CD8-positive, alpha-beta T cell (primary cell): ENCODE measurements at regions of chr15 and their contacts with region 1.

Region 1: GRCh38 chr15:34587717-34588674 is 4.5 kb upstream of the GOLGA8B start:
- DNase-seq: peak; percentile 23 to 79 (median 62)
- ATAC-seq: peak; percentile 65
- H3K4me3 ChIP-seq: no peak overlapping the region
- H3K4me3 Mint-ChIP-seq: peak overlapping the region; percentile 72
- H3K27ac ChIP-seq: no peak overlapping the region
- H3K27ac Mint-ChIP-seq: peak overlapping the region; percentile 62
- H3K4me1 ChIP-seq: peaks cover 5% of the 10 kb centered on the region
- H3K4me1 Mint-ChIP-seq: peaks cover 8% of the 10 kb centered on the region
- H3K27me3 ChIP-seq: no peaks in the 10 kb centered on the region
- H3K27me3 Mint-ChIP-seq: peaks cover 18% of the 10 kb centered on the region
- CTCF ChIP-seq: peak; percentile 83

Region 2: DNA sequence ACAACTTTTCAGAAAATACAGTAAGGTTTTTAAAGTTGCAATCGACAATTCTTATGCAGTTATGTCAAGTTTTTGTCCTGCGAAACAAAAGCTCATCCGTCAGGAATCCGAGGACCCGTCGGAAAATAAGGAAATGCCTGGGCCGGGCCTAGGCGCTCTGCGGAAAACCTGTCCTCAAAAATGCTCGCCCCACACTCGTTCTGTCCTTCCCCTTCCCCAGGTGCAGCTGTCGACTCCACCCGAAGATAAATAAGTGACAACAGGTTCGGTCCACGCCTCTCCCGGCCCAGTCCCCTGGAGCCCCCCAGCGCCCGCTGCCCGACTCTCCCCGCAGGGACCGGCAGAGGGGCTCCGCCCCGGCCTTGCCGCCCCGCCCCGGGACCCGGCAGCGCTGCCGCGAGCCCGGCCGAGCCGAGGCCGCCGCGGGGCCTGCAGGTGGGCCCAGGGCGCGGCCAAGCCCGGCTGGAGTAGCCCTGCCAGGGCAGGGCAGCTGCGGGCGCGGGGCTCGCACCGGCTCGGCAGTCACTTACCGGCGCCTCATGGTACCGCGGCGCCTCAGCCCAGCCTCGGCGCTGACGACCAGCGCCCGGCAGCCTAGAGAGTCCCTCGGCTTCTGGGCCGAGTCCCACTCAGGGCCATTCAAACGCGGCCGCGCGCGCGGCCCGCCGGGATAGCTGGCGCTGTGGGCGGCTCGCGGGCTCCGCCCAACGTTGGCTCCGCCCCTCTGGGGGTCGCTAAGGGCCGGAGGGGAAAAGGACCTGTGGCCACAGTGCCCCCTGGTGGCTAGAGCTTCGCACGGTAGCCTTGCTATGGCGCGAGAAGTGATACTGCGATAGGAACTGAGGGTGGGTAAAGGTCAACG is 378.3 kb before region 1 on chr15 and contains the start of gene KATNBL1:
- CTCF ChIA-PET with region 1: no interaction called
- POLR2A ChIA-PET with region 1: no interaction called
- intact Hi-C with region 1: loop called in 1 of 2 experiments (anchors 1 kb)
- DNase-seq: peak; percentile 88 to 99 (median 97)
- ATAC-seq: peak; percentile 94
- H3K4me3 ChIP-seq: peak within 1 kb of the TSS; percentile 49 to 71
- H3K4me3 Mint-ChIP-seq: peak within 1 kb of the TSS; percentile 92
- H3K27ac ChIP-seq: peak within 1 kb of the TSS; percentile 38 to 62
- H3K27ac Mint-ChIP-seq: peak within 1 kb of the TSS; percentile 92
- H3K4me1 ChIP-seq: peaks cover 14% of the 10 kb centered on the region
- H3K4me1 Mint-ChIP-seq: peaks cover 26% of the 10 kb centered on the region
- H3K27me3 ChIP-seq: no peaks in the 10 kb centered on the region
- H3K27me3 Mint-ChIP-seq: no peaks in the 10 kb centered on the region
- CTCF ChIP-seq: peak; percentile 69
- total RNA-seq, gene KATNBL1: 9.3 to 10.0 TPM

Region 3: GRCh38 chr15:34342737-34343575 is 245.0 kb before region 1 on chr15 and contains the starts of genes NOP10 and NUTM1:
- CTCF ChIA-PET with region 1: interaction called, 3 read pairs
- POLR2A ChIA-PET with region 1: no interaction called
- intact Hi-C with region 1: loop called in 1 of 2 experiments (anchors 1 kb)
- DNase-seq: peak; percentile 87 to 96 (median 93)
- ATAC-seq: peak; percentile 83
- H3K4me3 ChIP-seq: peak within 1 kb of the TSS; percentile 88 to 90
- H3K4me3 Mint-ChIP-seq: no peak within 1 kb of the TSS
- H3K27ac ChIP-seq: peak within 1 kb of the TSS; percentile 82 to 90
- H3K27ac Mint-ChIP-seq: peak within 1 kb of the TSS; percentile 85
- H3K4me1 ChIP-seq: peaks cover 20% of the 10 kb centered on the region
- H3K4me1 Mint-ChIP-seq: peaks cover 24% of the 10 kb centered on the region
- H3K27me3 ChIP-seq: no peaks in the 10 kb centered on the region
- H3K27me3 Mint-ChIP-seq: no peaks in the 10 kb centered on the region
- CTCF ChIP-seq: peak; percentile 90
- total RNA-seq, gene NOP10: 36.6 to 40.1 TPM
- total RNA-seq, gene NUTM1: not detected

Region 4: DNA sequence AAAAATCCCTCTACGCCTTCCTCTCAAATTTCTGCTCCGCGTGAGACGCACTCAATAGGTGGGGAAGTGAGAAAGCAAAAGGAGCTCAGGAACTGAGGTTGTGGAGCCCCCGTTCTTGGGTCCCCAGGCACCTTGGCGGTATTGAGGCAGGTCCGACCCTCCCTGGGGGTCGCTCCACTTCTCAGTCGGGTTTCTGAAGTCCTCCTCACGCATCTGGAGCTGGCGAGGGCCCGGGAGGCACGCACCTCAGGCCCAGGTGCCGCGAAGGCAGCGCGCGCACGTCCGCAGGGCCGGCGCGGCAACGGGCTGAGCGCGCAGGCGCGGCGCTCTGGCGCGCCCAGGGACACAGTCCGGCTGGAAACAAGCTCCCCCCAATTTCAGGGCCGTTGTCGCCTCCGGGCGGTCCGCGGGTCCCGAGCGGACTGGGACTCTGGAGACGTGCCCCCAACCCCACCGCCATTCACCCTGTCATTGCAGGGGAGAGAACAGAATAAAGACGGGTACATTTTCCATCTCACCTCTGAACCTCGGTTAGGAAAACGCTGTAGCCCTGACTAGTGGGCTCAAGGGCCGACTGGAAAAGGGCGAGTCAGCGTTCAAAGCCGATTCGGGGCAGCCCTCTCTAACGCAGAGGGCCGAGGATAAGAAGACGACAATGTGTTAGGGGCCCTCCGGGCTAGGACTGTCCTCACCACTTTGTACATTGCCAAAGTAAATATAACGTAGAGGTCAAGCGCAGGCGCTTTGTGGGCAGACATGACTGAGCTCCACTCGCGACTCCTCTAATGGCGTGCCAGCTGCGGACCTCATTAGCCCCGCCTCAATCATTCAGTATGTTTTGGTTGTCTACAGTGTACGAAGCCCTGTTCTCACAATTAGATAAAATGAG is 400.2 kb after region 1 on chr15 and contains the start of gene ZNF770:
- CTCF ChIA-PET with region 1: no interaction called
- POLR2A ChIA-PET with region 1: no interaction called
- intact Hi-C with region 1: loop called in 1 of 2 experiments (anchors 5 kb)
- DNase-seq: peak; percentile 72 to 93 (median 81)
- ATAC-seq: peak; percentile 89
- H3K4me3 ChIP-seq: peak within 1 kb of the TSS; percentile 99 to 100
- H3K4me3 Mint-ChIP-seq: peak within 1 kb of the TSS; percentile 99
- H3K27ac ChIP-seq: peak within 1 kb of the TSS; percentile 95 to 96
- H3K27ac Mint-ChIP-seq: peak within 1 kb of the TSS; percentile 99
- H3K4me1 ChIP-seq: peaks cover 24% of the 10 kb centered on the region
- H3K4me1 Mint-ChIP-seq: peaks cover 45% of the 10 kb centered on the region
- H3K27me3 ChIP-seq: no peaks in the 10 kb centered on the region
- H3K27me3 Mint-ChIP-seq: peaks cover 1% of the 10 kb centered on the region
- CTCF ChIP-seq: no peak
- total RNA-seq, gene ZNF770: 32.9 to 37.7 TPM